HCT116 (cell line): ENCODE measurements at regions of chrX and their contacts with region 1.

Region 1: GRCh38 chrX:45735571-45735970 is 534.9 kb upstream of the DIPK2B start:
- DNase-seq: no peak
- ATAC-seq: no peak
- H3K4me3 ChIP-seq: no peak overlapping the region
- H3K27ac ChIP-seq: peak overlapping the region; percentile 30; the same call in 1 of the 2 replicates
- H3K4me1 ChIP-seq: peaks cover 0 to 21% of the 10 kb centered on the region in 2 experiments; a peak in 2 of 4 replicates
- H3K27me3 ChIP-seq: no peaks in the 10 kb centered on the region
- CTCF ChIP-seq: no peak
- POLR2A ChIP-seq: no peak
- RAD21 ChIP-seq: no peak

Region 2: DNA sequence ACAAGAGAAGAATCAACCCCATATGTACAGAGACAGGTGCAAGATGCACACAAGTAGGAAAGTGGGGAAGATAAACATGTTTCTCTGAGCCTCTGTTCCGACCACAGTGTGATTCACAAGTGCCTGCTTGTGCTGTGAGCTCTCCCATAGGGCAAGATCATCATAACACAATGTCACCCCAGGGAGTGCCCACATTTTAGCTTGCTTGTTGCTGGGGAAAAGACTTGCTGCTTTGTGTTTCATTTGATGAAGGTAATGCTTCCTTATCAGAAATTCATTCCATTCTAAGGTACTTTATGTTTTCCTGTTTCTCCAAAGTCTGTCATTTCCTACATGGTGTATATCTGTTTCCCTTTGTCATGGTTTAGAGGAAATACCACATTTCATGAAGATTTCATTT is 230.4 kb before region 1 on chrX:
- CTCF ChIA-PET with region 1: no interaction called
- POLR2A ChIA-PET with region 1: no interaction called
- RAD21 ChIA-PET with region 1: no interaction called
- intact Hi-C with region 1: no loop called
- DNase-seq: no peak
- ATAC-seq: no peak
- H3K4me3 ChIP-seq: no peak overlapping the region
- H3K27ac ChIP-seq: peak overlapping the region; percentile 96
- H3K4me1 ChIP-seq: peaks cover 26 to 45% of the 10 kb centered on the region in 2 experiments
- H3K27me3 ChIP-seq: no peaks in the 10 kb centered on the region
- CTCF ChIP-seq: no peak
- POLR2A ChIP-seq: no peak
- RAD21 ChIP-seq: no peak

Region 3: GRCh38 chrX:45697591-45697990 is 38.0 kb before region 1 on chrX:
- CTCF ChIA-PET with region 1: no interaction called
- POLR2A ChIA-PET with region 1: no interaction called
- RAD21 ChIA-PET with region 1: no interaction called
- intact Hi-C with region 1: loop called (anchors 2 kb)
- DNase-seq: no peak
- ATAC-seq: no peak
- H3K4me3 ChIP-seq: no peak overlapping the region
- H3K27ac ChIP-seq: no peak overlapping the region
- H3K4me1 ChIP-seq: peaks cover 0 to 13% of the 10 kb centered on the region in 2 experiments; a peak in 2 of 4 replicates
- H3K27me3 ChIP-seq: no peaks in the 10 kb centered on the region
- CTCF ChIP-seq: no peak
- POLR2A ChIP-seq: no peak
- RAD21 ChIP-seq: no peak

Region 4: DNA sequence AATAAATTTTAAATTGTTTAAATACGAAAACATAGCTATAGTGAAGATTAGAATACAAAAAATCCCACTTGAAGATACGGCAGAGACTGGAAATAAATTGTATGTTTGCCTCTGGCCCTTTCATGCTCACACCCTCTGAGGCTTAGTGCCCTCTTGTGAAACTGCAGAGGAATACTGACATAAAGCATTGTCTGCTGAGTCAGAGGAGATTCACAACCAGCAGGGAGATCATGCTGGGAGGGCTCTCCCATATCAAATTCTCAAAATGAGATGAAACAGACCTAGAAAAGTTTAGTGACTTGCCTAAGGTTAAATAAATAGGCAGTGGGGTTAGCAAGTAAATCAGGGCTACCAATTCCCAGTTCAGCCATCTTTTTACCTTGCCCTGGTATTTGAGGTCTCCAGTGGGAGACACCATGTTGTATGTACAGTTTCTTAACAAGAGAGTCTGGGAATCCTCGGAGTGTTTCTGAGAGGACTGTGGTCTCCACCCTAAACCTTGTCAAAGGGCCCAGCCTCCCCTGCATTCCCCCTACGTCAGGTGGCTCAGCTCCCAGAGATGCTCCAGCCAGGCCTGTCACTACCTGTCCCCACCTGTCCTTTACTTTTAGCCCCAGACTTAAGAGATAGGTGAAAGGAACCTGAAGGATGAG is 46.5 kb after region 1 on chrX:
- CTCF ChIA-PET with region 1: no interaction called
- POLR2A ChIA-PET with region 1: no interaction called
- RAD21 ChIA-PET with region 1: no interaction called
- intact Hi-C with region 1: no loop called
- DNase-seq: no peak
- ATAC-seq: peak; percentile 75
- H3K4me3 ChIP-seq: no peak overlapping the region
- H3K27ac ChIP-seq: peak overlapping the region; percentile 94
- H3K4me1 ChIP-seq: peaks cover 84 to 100% of the 10 kb centered on the region in 2 experiments
- H3K27me3 ChIP-seq: no peaks in the 10 kb centered on the region
- CTCF ChIP-seq: peak in 2 of 3 experiments; percentile 12 to 16; a peak in 1 of 6 replicates
- POLR2A ChIP-seq: no peak
- RAD21 ChIP-seq: no peak

Region 5: DNA sequence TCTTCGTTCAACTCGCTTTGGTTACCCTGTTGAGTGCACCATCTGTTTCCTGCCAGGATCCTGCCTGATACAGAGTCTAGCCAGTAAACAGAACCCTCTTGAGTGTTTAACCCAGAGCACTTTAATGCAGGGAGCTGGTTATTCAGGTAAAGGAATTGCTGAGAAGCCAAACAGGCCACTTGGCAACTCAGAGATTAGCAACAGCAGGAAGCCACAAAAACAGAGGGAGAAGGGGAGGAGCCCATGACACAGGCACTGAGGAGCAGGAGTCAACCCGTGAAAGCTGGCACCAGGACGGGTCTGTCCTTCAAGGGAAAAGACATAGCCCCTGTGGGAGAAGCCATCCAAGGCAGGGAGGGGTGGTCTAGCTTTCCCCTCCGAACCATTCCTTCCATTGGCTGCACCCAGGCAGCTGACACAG is 168.2 kb after region 1 on chrX:
- CTCF ChIA-PET with region 1: no interaction called
- POLR2A ChIA-PET with region 1: no interaction called
- RAD21 ChIA-PET with region 1: no interaction called
- intact Hi-C with region 1: no loop called
- DNase-seq: no peak
- ATAC-seq: no peak
- H3K4me3 ChIP-seq: no peak overlapping the region
- H3K27ac ChIP-seq: no peak overlapping the region
- H3K4me1 ChIP-seq: no peaks in the 10 kb centered on the region
- H3K27me3 ChIP-seq: no peaks in the 10 kb centered on the region
- CTCF ChIP-seq: no peak
- POLR2A ChIP-seq: no peak
- RAD21 ChIP-seq: no peak